ENCODE measurements at regions of chr4 and their contacts with region 1.

Region 1: DNA sequence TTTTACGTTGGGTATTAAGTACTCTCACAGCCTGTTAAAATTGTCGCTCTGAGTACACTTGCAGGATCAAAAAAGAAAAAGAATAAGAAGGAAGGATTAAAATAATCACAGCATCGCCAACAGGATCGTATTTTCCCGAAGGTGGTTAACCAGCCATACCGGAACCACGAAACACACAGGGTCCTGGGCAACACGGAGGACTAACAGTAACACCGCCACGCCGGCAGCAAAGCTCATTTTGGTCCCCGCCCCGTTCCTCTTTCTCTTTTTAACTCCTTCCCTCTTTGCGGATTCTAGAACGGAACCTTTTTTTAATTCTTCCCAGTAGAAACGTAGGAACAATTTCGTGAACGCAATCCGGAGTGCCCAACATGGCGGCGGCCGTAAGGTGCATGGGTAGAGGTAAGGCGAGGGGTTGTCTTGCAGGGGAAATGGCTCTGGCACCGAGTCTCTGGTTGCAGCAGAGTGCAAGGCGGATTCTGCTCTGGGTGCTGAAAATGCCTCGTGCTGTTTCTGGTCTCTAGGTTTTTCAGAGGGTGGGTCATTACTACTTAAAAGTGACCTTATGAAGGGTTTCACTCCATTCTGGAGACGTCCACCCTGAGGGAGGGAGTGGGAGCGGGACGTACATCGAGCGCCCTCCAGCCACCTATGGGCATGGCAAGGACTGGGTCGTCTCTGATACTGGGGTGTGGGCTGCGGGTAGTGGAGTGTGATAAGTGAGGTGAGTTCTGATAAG is at the start of gene MRPL1:
- DNase-seq: peak; percentile 96
- ATAC-seq: peak; percentile 98
- H3K4me3 ChIP-seq: peak within 1 kb of the TSS; percentile 66
- H3K27ac ChIP-seq: peak within 1 kb of the TSS; percentile 81
- H3K4me1 ChIP-seq: peaks cover 1% of the 10 kb centered on the region; the same call in 1 of the 2 replicates
- H3K27me3 ChIP-seq: no peaks in the 10 kb centered on the region
- CTCF ChIP-seq: no peak
- POLR2A ChIP-seq: peak; percentile 94
- RAD21 ChIP-seq: no peak
- total RNA-seq, gene MRPL1: 13.4 and 33.6 TPM in 2 replicates

Region 2: DNA sequence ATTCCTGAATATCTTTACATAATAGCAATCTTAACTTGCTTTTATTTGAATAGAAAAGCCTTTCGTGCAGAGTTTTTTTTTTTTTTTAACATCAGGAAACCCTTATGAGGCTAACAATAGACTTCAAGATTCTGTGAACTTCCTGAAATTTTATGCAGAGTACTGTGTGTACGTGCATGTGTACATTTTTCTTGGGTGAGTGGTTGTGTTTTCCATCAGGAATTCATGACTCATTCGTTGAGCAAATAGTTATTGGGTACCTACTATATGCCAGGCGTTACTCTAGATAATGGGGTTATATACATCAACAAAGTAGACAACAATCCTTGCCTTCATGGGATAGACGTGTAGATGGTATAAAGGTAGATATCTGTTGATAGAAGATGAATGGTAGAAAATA is 59.1 kb after region 1 on chr4:
- CTCF ChIA-PET with region 1: interaction called, 3 read pairs
- POLR2A ChIA-PET with region 1: no interaction called
- dilution Hi-C with region 1: no loop called
- in situ Hi-C with region 1: no loop called
- intact Hi-C with region 1: loop called (anchors 5 kb)
- DNase-seq: peak; percentile 96
- ATAC-seq: peak; percentile 86
- H3K4me3 ChIP-seq: no peak overlapping the region
- H3K27ac ChIP-seq: peak overlapping the region; percentile 55; the same call in 1 of the 2 replicates
- H3K4me1 ChIP-seq: peaks cover 14% of the 10 kb centered on the region
- H3K27me3 ChIP-seq: no peaks in the 10 kb centered on the region
- CTCF ChIP-seq: no peak
- POLR2A ChIP-seq: no peak
- RAD21 ChIP-seq: no peak

Region 3: DNA sequence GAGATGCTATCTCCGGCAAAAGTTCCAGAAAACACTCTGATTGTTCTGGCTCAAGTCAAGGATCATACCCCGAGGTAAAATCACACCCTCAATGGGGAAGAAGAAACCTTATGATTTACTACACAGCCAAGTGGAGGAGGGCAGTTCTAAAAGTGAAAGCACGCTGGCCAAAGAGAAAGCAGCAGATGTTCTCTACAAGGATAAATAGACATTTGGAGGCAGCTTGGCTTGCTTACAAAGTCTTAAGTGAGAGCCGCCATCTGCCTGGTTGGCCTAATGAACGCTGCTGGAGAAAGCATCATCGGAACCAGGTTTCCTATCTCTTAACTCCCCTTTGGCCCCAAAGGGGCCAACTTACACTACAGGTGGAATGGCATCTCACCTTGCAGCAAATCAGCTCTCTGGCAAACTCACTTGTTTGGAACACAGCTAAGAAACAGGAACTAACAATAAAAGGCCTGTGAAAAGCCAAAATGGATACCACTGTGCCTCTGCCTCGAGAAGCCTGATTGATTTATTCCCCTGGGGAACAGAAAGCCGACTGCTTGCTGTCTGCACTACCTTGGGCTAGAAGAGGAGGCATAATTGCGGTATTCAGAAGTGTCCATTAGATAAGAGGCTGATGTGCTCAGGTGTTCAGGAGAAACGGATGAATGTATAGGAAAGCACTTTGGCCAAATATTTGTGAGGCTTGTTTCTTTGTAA is 217.2 kb after region 1 on chr4:
- CTCF ChIA-PET with region 1: no interaction called
- POLR2A ChIA-PET with region 1: no interaction called
- dilution Hi-C with region 1: no loop called
- in situ Hi-C with region 1: no loop called
- intact Hi-C with region 1: no loop called
- DNase-seq: no peak
- ATAC-seq: no peak
- H3K4me3 ChIP-seq: no peak overlapping the region
- H3K27ac ChIP-seq: no peak overlapping the region
- H3K4me1 ChIP-seq: no peaks in the 10 kb centered on the region
- H3K27me3 ChIP-seq: peaks cover 2% of the 10 kb centered on the region; the same call in 1 of the 2 replicates
- CTCF ChIP-seq: no peak
- POLR2A ChIP-seq: no peak
- RAD21 ChIP-seq: no peak

Region 4: GRCh38 chr4:78417603-78418002 is 555.0 kb after region 1 on chr4:
- CTCF ChIA-PET with region 1: no interaction called
- POLR2A ChIA-PET with region 1: no interaction called
- dilution Hi-C with region 1: no loop called
- in situ Hi-C with region 1: no loop called
- intact Hi-C with region 1: no loop called
- DNase-seq: no peak
- ATAC-seq: no peak
- H3K4me3 ChIP-seq: no peak overlapping the region
- H3K27ac ChIP-seq: no peak overlapping the region
- H3K4me1 ChIP-seq: no peaks in the 10 kb centered on the region
- H3K27me3 ChIP-seq: peaks cover 7% of the 10 kb centered on the region
- CTCF ChIP-seq: no peak
- POLR2A ChIP-seq: no peak
- RAD21 ChIP-seq: no peak

Region 5: DNA sequence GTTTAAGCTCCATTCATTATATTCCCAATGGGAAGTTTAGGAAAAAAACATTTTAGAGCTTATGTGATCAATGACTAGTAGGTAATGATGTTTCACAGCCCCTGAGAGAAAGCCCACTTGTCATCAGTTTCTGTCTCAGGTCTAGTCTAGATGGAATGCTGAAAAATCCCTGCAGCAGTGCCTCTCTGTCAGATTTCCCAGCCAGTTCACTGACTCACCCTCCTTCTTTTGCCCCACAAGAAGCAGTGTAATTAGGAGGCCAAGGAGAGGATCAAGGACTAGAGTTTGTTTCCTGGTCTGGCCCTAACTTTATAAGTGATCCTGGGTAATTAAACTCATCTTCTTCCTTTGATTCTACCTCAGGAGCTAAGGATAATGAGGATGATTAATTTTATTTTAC is 570.2 kb after region 1 on chr4:
- CTCF ChIA-PET with region 1: no interaction called
- POLR2A ChIA-PET with region 1: no interaction called
- dilution Hi-C with region 1: no loop called
- in situ Hi-C with region 1: no loop called
- intact Hi-C with region 1: no loop called
- DNase-seq: peak; percentile 1
- ATAC-seq: no peak
- H3K4me3 ChIP-seq: no peak overlapping the region
- H3K27ac ChIP-seq: no peak overlapping the region
- H3K4me1 ChIP-seq: no peaks in the 10 kb centered on the region
- H3K27me3 ChIP-seq: peaks cover 4% of the 10 kb centered on the region
- CTCF ChIP-seq: no peak
- POLR2A ChIP-seq: no peak
- RAD21 ChIP-seq: no peak

Measured in IMR-90 (cell line).